ENCODE measurements at regions of chrX and their contacts with region 1.

Region 1: GRCh38 chrX:115226929-115227328 is 7.0 kb downstream of the LRCH2 start:
- DNase-seq: peak; percentile 36
- H3K4me3 ChIP-seq: no peak overlapping the region
- H3K27ac ChIP-seq: no peak overlapping the region
- H3K4me1 ChIP-seq: no peaks in the 10 kb centered on the region
- H3K27me3 ChIP-seq: peaks cover 16% of the 10 kb centered on the region
- CTCF ChIP-seq: peak; percentile 39 to 58

Region 2: DNA sequence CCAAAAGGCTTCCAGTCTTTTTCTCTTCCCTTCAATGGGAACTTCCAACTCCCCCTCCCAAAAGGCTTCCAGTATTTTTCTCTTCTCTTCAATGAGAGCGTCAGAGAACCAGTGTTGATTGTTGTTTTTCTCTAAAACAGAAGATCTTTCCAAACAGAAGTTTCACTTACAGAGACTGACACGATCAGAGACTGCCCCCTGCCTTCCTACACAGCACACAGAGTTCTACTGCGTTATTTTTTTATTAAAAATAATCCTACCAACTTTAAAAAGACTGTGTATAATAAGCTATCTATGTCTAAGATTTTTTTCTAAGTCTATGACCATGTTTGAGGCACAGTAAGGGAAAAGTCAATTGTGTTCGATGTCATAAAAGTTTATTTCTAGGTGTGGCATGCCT is 646.6 kb before region 1 on chrX:
- CTCF ChIA-PET with region 1: no interaction called
- dilution Hi-C with region 1: no loop called
- in situ Hi-C with region 1: no loop called
- intact Hi-C with region 1: no loop called
- DNase-seq: no peak
- H3K4me3 ChIP-seq: no peak overlapping the region
- H3K27ac ChIP-seq: no peak overlapping the region
- H3K4me1 ChIP-seq: no peaks in the 10 kb centered on the region
- H3K27me3 ChIP-seq: peaks cover 27% of the 10 kb centered on the region
- CTCF ChIP-seq: peak in 1 of 2 donors; percentile 10

Region 3: DNA sequence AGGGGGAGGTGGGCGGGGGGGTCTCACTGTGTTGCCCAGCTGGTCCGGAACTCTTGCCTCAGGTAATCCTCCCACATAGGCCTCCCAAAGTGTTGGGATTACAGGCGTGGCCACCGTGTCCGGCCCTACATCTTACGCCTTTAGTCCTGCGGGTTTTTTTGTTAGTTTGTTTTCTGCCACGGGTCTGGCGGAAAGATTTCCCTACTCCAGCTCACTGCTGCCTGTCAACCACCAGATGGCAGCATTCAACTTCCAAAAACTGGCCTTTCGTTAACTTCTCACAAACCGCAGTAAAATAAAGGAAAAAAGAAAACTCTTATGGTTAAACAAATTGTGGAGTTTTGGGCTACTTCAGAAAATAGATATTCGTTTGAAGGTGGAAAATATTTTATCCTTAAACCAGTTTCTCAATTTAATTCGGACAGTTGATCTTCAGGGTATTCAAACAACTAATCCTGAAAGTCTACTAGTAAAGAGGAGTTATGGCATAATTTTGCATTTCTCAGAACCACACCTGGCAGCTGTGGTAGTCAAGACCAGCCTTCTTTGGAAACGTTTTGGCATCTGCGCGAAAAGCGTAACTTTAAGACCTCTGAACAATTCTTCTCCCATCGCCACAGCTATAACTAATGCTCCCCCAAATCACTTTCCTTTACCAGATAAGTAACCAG is 103.7 kb after region 1 on chrX:
- CTCF ChIA-PET with region 1: no interaction called
- dilution Hi-C with region 1: no loop called
- in situ Hi-C with region 1: no loop called
- intact Hi-C with region 1: no loop called
- DNase-seq: peak; percentile 45
- H3K4me3 ChIP-seq: no peak overlapping the region
- H3K27ac ChIP-seq: no peak overlapping the region
- H3K4me1 ChIP-seq: no peaks in the 10 kb centered on the region
- H3K27me3 ChIP-seq: no peaks in the 10 kb centered on the region
- CTCF ChIP-seq: peak; percentile 73 to 84

Region 4: GRCh38 chrX:115679460-115679859 is 452.5 kb after region 1 on chrX:
- CTCF ChIA-PET with region 1: no interaction called
- dilution Hi-C with region 1: no loop called
- in situ Hi-C with region 1: no loop called
- intact Hi-C with region 1: loop called (anchors 2 kb)
- DNase-seq: peak; percentile 6
- H3K4me3 ChIP-seq: no peak overlapping the region
- H3K27ac ChIP-seq: no peak overlapping the region
- H3K4me1 ChIP-seq: no peaks in the 10 kb centered on the region
- H3K27me3 ChIP-seq: peaks cover 4% of the 10 kb centered on the region
- CTCF ChIP-seq: peak; percentile 46 to 51

Region 5: DNA sequence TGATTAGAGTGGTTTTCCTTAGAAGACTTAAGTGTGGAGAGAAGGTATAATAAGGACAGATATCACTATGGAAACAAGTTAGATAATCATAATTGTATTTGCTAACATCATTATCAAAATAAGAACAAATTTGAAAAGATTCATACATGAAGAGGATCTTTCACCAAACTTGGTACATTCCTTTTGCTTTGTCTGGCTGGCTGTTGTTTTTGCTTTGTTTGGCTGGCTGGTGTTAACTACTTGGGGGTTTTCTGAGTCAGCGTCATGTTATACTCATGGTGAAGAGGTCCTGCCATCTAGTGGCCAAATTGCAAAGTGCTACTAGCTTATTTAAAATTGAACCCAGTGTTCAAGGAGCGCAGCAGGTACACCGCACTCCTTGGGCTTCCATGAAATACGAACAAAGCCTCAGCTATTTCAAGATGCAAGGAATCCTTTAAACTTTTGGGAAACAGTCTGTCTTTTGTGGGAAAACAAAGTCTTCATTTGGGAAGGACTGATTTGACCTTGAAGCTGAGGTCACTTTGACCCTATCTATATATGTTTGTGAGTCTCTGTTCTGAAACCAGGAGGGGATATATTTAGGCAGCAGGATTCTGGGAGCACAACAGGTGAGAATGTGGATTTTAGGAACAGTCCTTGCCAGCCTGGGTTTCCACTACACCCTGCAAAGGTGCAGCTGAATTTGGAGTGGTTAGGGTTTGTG is 463.7 kb after region 1 on chrX:
- CTCF ChIA-PET with region 1: no interaction called
- dilution Hi-C with region 1: no loop called
- in situ Hi-C with region 1: no loop called
- intact Hi-C with region 1: loop called (anchors 2 kb)
- DNase-seq: peak; percentile 64
- H3K4me3 ChIP-seq: no peak overlapping the region
- H3K27ac ChIP-seq: no peak overlapping the region
- H3K4me1 ChIP-seq: no peaks in the 10 kb centered on the region
- H3K27me3 ChIP-seq: peaks cover 2% of the 10 kb centered on the region
- CTCF ChIP-seq: peak; percentile 83 to 85

Measured in mammary epithelial cell (primary cell).